Motor neuron (in vitro differentiated cells): ENCODE measurements at regions of chr9 and their contacts with region 1.

Region 1: GRCh38 chr9:85258823-85259370 is 482.9 kb downstream of the AGTPBP1 start:
- ATAC-seq: peak; percentile 99 to 100 (median 100)
- H3K4me3 ChIP-seq: no peak overlapping the region
- H3K27ac ChIP-seq: no peak overlapping the region
- H3K4me1 ChIP-seq: peaks cover 12 to 16% of the 10 kb centered on the region in 2 donors

Region 2: GRCh38 chr9:84397151-84397728 is 861.7 kb before region 1 on chr9:
- in situ Hi-C with region 1: loop called in 4 of 9 experiments (anchors 25 kb)
- ATAC-seq: peak; percentile 79 to 98 (median 96)
- H3K4me3 ChIP-seq: no peak overlapping the region
- H3K27ac ChIP-seq: no peak overlapping the region
- H3K4me1 ChIP-seq: peaks cover 2 to 4% of the 10 kb centered on the region in 2 donors

Region 3: DNA sequence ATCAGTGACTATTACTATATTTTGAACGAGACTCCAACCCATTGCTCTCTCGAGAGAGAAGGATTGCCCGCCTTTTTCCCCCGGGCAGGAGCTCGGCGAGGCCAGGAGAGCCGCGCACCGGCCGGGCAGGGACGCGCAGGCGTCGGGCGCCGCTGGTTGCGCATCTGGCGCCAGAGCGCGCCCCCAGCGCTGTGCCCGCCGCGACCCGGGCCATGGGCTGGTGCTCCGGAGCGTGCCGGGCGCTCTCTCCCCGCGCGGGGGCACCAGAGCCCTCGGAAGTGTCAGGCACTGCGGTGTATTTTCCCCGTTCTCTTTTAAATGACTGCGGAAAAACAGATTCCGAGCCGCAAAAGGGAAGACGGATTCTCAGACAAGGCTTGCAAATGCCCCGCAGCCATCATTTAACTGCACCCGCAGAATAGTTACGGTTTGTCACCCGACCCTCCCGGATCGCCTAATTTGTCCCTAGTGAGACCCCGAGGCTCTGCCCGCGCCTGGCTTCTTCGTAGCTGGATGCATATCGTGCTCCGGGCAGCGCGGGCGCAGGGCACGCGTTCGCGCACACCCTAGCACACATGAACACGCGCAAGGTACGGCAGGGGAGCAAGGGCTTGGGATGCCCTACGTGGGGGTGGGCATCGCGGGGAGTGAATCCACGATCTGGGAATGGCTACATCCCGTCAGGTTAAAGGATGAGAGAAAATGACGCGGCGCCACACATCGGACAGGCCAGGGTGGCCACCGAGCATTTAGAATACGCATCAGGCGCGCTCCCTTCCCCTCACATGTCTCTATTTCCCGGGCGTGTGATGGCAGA is 590.5 kb before region 1 on chr9:
- in situ Hi-C with region 1: loop called in 1 of 9 experiments (anchors 25 kb)
- ATAC-seq: peak; percentile 63 to 93 (median 85)
- H3K4me3 ChIP-seq: peak overlapping the region; percentile 48 to 78 (median 69)
- H3K27ac ChIP-seq: peak overlapping the region; percentile 45
- H3K4me1 ChIP-seq: no peaks in the 10 kb centered on the region

Region 4: DNA sequence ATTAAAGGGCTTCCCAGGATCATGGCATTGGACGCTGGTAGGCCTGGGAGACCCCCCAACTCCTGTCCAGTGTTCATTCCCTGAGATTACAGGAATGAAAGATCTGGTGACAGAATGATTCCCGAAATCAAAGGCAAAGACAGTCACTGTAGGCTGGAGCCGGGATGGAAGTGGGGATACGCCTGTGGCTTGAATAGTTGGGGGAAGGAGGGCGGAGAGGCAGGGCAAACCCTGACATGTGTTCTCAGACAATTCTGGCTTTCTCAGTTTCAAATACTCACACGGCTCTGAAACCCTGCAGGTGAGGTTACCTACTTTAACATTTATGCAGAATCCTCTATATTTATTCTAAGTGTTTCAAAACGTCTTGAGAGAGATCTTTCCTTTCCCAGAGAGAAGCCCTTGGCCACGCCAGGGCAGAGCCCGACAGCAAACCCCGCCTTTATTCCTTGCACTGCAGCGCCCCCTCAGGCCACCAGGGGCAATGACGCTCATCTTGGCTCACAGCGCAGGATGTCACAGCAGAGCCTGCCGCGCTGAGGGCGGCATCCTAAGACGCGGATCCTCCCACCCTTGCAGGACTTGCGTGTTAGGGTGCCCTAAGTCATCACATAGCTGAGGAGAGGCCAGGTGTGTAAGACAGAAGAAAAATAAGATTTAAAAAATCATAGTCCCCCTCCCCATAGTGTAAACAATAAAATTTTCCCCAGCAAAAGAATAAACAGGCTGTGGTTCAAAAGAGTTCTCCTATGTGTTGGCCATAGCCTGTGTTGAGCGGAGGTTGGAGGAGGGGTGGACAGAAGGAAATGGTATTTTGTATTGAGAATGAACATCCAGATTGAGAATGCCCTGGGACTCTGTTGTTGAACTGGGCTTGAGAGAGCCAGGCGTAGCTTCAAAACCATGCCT is 304.8 kb before region 1 on chr9:
- in situ Hi-C with region 1: loop called in 1 of 9 experiments (anchors 25 kb)
- ATAC-seq: peak; percentile 99 to 100 (median 100)
- H3K4me3 ChIP-seq: no peak overlapping the region
- H3K27ac ChIP-seq: no peak overlapping the region
- H3K4me1 ChIP-seq: peaks cover 4 to 7% of the 10 kb centered on the region in 2 donors

Region 5: DNA sequence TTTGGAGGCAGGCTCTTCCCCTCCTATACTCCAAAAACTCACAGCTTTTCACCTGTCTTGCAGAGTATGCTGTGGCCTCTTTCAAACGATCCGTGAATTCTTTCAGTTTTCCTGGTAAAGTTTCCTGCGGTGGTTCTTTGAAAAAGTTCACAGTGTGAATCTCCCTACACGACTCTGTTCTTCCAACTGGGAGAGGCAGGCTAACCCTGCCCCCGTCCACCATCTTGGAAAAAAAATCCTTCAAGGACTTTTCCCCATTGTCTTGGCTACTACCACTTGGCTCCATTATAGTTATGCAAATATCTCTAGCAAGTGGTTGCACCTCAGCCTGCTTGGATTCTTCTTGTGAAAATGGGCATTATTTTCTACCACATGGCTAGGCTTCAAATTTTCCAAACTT is 100.3 kb after region 1 on chr9:
- in situ Hi-C with region 1: no loop called
- ATAC-seq: no peak
- H3K4me3 ChIP-seq: no peak overlapping the region
- H3K27ac ChIP-seq: no peak overlapping the region
- H3K4me1 ChIP-seq: no peaks in the 10 kb centered on the region

Region 6: DNA sequence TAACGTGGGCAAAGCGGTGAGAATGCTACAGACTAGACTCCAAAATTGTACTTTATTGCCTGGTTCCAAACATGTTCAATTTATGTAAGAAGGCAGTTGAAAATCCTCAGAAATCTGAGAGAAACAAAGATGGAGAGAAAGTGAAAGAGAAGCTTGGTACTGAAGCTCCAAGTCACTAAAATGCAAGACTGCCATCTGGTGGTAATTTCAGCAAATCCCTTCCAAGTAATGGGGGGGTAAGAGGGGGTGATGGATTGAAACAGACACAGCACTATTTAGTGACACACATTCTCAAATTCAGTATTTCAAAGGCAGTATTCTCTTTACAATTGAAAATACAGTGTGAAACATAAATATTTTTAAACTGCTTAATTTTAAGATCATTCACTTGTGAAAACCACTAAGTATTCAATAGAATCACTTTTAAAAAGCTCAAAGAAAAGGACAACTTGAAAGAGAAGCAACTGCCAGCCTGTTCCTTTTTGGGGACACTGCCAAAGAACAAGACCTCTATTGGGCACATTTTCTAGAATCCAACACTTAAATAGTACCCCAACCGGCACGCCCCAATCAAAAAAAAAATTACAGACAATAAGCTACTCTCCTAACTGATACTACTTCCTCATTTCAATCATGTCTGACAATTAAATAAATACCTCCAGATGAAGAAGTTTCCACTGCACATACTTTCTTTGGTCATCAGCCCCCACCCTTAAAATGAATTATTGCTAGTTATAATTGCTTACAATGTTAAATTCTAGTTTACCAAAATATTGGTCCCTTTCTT is 351.4 kb after region 1 on chr9:
- in situ Hi-C with region 1: loop called in 1 of 9 experiments (anchors 25 kb)
- ATAC-seq: peak; percentile 54 to 98 (median 79)
- H3K4me3 ChIP-seq: no peak overlapping the region
- H3K27ac ChIP-seq: no peak overlapping the region
- H3K4me1 ChIP-seq: peaks cover 0 to 2% of the 10 kb centered on the region in 2 donors